ENCODE measurements at regions of chr16 and their contacts with region 1.

Region 1: DNA sequence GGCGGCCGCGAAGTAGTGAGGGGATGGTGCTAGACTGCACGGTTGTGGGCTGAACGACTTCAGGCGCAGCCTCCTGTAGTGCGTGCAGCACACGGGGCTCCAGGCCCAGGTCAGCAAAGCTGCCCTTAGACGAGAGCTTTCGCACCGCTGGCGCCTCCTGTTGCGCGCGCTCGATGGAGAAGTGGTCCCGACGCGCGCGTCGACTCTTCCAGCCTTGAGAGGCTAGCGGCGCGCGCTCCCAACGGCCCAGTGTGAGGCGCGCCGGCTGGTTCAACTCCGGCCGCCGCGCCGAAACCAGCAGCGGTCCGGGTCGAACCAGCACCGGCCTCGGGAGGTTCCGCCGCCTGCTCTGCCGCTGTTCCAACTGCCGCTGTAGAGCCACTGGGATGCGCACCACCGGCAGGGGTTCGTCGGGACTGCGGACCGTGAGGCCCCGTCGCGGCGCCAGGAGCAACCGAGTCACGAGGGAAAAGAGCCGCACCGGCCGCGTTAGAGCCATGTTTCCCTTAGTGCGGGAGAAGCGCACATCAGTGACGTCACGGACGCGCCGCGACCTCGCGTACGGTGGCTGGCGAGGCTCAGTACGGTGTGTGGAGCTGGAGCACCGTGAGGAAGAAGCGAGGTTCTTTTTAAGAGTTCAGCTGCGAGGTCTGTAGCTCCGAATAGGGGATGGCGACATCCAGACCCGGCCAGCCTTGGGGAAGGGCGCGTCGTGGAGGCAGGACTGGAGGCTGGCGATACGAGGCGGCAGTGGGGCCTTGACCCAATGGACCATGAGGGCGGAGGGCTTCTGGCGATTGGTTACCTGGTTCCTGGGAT is at the starts of genes DDX28 and DUS2:
- DNase-seq: peak; percentile 92
- CTCF ChIP-seq: peak; percentile 17

Region 2: GRCh38 chr16:67942200-67942509 is 80.8 kb before region 1 on chr16:
- CTCF ChIA-PET with region 1: no interaction called
- POLR2A ChIA-PET with region 1: no interaction called
- DNase-seq: peak; percentile 75
- CTCF ChIP-seq: peak; percentile 68

Region 3: GRCh38 chr16:67986949-67987348 is 36.0 kb before region 1 on chr16:
- CTCF ChIA-PET with region 1: interaction called, 10 read pairs
- POLR2A ChIA-PET with region 1: interaction called, 11 read pairs
- DNase-seq: no peak
- CTCF ChIP-seq: no peak

Region 4: GRCh38 chr16:67993189-67994039 is 29.5 kb before region 1 on chr16:
- CTCF ChIA-PET with region 1: interaction called, 10 read pairs
- POLR2A ChIA-PET with region 1: no interaction called
- DNase-seq: peak; percentile 89
- CTCF ChIP-seq: peak; percentile 93

Region 5: GRCh38 chr16:68005786-68006286 is 17.1 kb before region 1 on chr16:
- CTCF ChIA-PET with region 1: interaction called, 12 read pairs
- POLR2A ChIA-PET with region 1: interaction called, 6 read pairs
- DNase-seq: no peak
- CTCF ChIP-seq: no peak

Region 6: GRCh38 chr16:68473358-68474070 is 450.6 kb after region 1 on chr16:
- CTCF ChIA-PET with region 1: no interaction called
- POLR2A ChIA-PET with region 1: no interaction called
- DNase-seq: no peak
- CTCF ChIP-seq: no peak